Right ventricle myocardium superior (tissue), 1 donor: ENCODE measurements at regions of chr4 and their contacts with region 1.

Region 1: GRCh38 chr4:108570993-108571569 is 49.3 kb upstream of the RPL34 start:
- DNase-seq: no peak
- ATAC-seq: no peak

Region 2: DNA sequence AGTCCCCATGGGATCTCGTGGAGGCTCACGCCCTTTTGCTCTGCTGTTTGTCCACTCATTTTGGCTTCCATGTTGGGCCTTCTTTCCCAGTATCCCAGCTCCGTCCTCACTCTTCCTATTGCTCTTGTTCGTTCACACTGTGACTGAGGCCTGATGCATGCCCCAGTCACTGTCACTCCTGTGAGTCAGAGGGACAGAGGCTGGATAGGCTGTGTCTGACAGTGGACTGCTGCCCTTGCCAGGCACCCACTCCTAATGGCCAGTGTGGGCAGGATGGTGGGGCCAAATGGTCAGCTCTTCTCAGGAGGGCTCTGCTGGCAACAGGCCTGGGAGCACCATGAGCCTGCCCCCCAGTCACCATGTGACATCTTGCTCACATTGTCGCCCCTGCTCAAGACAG is 541.4 kb before region 1 on chr4:
- intact Hi-C with region 1: loop called (anchors 10 kb)
- DNase-seq: no peak
- ATAC-seq: no peak

Region 3: DNA sequence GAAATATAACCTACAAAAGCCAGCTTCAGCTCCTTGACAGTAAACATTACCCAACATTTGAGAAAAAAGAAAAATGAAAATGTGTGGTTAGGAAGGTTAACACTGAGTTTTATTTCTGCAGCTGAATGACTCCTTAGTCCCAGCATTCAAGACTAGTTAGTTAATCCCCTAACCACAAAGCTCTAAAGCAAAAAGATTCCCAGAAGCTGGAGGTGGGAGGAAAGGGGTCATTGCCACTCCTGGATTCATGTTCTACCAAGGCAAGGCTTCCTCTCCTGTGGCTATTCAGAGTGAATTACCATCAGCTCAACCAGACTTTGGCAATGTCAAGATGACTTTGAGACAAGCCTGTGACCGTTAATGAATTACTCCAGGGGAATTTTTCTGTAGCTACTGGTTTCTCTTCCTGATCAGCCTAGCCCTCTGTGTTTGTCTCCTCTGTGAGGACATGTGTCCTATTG is 517.8 kb before region 1 on chr4:
- intact Hi-C with region 1: loop called (anchors 10 kb)
- DNase-seq: no peak
- ATAC-seq: no peak